ENCODE measurements at regions of chr10 and their contacts with region 1.

Region 1: GRCh38 chr10:3472287-3473051 is 299.9 kb upstream of the PITRM1 start:
- DNase-seq: peak; percentile 67
- H3K4me3 Mint-ChIP-seq: peak overlapping the region; percentile 13
- H3K27ac Mint-ChIP-seq: peak overlapping the region; percentile 74
- H3K4me1 Mint-ChIP-seq: peaks cover 44% of the 10 kb centered on the region
- H3K27me3 Mint-ChIP-seq: no peaks in the 10 kb centered on the region
- CTCF ChIP-seq: no peak

Region 2: DNA sequence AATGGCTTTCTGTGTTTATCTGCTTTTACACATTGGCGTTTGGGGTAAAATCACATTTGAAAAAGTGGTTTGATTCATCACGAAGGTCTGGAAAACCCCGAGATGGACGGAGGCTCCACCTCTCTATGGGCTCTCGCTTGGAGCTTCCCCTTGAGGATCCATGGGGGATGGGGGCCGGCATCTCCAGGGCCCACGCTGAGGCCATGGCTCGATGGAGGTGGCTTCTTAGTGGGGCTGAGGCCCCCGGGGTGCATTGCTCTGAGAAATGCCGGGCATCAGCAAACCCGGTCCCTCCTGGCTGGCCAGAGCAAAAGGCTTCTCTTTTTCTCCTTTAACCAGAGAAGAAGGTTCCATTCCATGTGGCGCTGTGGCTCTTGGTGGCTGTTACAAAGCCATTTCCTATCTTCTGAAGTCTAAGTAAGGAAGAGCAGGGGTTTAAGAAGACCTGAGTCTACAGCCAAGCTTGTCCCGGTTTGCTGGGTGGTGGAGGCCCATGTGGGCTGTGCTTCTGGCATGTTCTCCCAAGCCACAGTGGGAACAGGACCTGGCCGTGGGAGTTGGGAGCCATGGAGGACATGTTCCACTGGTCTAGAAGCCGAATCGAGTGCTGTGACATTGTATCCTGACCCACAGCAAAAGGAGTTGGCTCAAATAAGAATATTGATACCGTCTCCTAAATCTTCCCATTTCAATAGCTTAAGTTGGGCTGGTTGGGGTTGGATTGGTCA is 56.4 kb before region 1 on chr10:
- CTCF ChIA-PET with region 1: no interaction called
- POLR2A ChIA-PET with region 1: no interaction called
- intact Hi-C with region 1: no loop called
- DNase-seq: no peak
- H3K4me3 Mint-ChIP-seq: no peak overlapping the region
- H3K27ac Mint-ChIP-seq: no peak overlapping the region
- H3K4me1 Mint-ChIP-seq: peaks cover 6% of the 10 kb centered on the region
- H3K27me3 Mint-ChIP-seq: no peaks in the 10 kb centered on the region
- CTCF ChIP-seq: no peak

Region 3: GRCh38 chr10:3482200-3483138 is 10.0 kb after region 1 on chr10:
- CTCF ChIA-PET with region 1: no interaction called
- POLR2A ChIA-PET with region 1: interaction called, 38 read pairs
- intact Hi-C with region 1: no loop called
- DNase-seq: peak; percentile 96
- H3K4me3 Mint-ChIP-seq: peak overlapping the region; percentile 55
- H3K27ac Mint-ChIP-seq: peak overlapping the region; percentile 79
- H3K4me1 Mint-ChIP-seq: peaks cover 22% of the 10 kb centered on the region
- H3K27me3 Mint-ChIP-seq: no peaks in the 10 kb centered on the region
- CTCF ChIP-seq: no peak

Region 4: GRCh38 chr10:3757638-3758490 is 285.4 kb after region 1 on chr10:
- CTCF ChIA-PET with region 1: no interaction called
- POLR2A ChIA-PET with region 1: interaction called, 44 read pairs
- intact Hi-C with region 1: no loop called
- DNase-seq: peak; percentile 91
- H3K4me3 Mint-ChIP-seq: peak overlapping the region; percentile 48
- H3K27ac Mint-ChIP-seq: peak overlapping the region; percentile 62
- H3K4me1 Mint-ChIP-seq: peaks cover 52% of the 10 kb centered on the region
- H3K27me3 Mint-ChIP-seq: no peaks in the 10 kb centered on the region
- CTCF ChIP-seq: no peak